HepG2 (cell line): ENCODE measurements at regions of chrX and their contacts with region 1.

Region 1: GRCh38 chrX:13487731-13488523 is 81.5 kb upstream of the EGFL6 start:
- DNase-seq: peak; percentile 10
- ATAC-seq: peak; percentile 75
- H3K4me3 ChIP-seq: no peak overlapping the region
- H3K27ac ChIP-seq: no peak overlapping the region
- H3K4me1 ChIP-seq: no peaks in the 10 kb centered on the region
- H3K27me3 ChIP-seq: no peaks in the 10 kb centered on the region
- CTCF ChIP-seq: peak; percentile 66
- EP300 ChIP-seq: no peak
- POLR2A ChIP-seq: no peak
- RAD21 ChIP-seq: peak; percentile 27; the same call in 1 of the 2 replicates

Region 2: GRCh38 chrX:13051529-13052172 is 436.3 kb before region 1 on chrX:
- CTCF ChIA-PET with region 1: no interaction called
- POLR2A ChIA-PET with region 1: no interaction called
- in situ Hi-C with region 1: loop called (anchors 25 kb)
- intact Hi-C with region 1: no loop called
- DNase-seq: no peak
- ATAC-seq: no peak
- H3K4me3 ChIP-seq: no peak overlapping the region
- H3K27ac ChIP-seq: no peak overlapping the region
- H3K4me1 ChIP-seq: no peaks in the 10 kb centered on the region
- H3K27me3 ChIP-seq: no peaks in the 10 kb centered on the region
- CTCF ChIP-seq: no peak
- EP300 ChIP-seq: no peak
- POLR2A ChIP-seq: no peak
- RAD21 ChIP-seq: no peak